PC-3 (cell line): ENCODE measurements at regions of chr15 and their contacts with region 1.

Region 1: DNA sequence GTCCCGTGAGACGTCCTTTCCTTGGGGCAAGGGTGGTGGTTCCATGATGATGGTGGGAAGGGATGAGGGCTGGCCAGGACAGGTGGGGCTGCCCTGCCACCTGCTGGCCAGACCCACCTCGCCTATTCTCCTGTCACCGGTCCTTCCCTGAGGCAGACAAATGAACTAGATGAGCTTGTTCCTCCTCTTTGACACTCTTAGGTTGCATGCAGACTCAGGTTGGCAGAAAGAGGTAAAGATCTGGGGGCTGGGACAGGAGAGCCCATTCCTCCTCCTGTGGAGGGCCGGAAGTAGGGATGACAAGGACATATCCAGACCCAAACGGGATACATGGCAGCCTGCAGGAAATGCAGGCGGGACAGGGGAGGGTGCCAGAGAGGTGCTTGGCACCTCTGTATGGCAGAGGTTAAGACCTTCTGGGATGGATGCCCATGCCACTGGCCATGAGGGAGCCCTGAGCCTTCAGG is 38.6 kb downstream of the ACSBG1 start:
- DNase-seq: peak; percentile 54
- ATAC-seq: peak; percentile 86
- H3K4me3 ChIP-seq: no peak overlapping the region
- H3K27ac ChIP-seq: no peak overlapping the region
- H3K4me1 ChIP-seq: no peaks in the 10 kb centered on the region
- H3K27me3 ChIP-seq: no peaks in the 10 kb centered on the region
- CTCF ChIP-seq: peak; percentile 90

Region 2: GRCh38 chr15:78131295-78132061 is 64.3 kb before region 1 on chr15 and contains the start of gene CIB2:
- CTCF ChIA-PET with region 1: interaction called, 4 read pairs
- POLR2A ChIA-PET with region 1: no interaction called
- intact Hi-C with region 1: loop called (anchors 5 kb)
- DNase-seq: peak; percentile 56
- ATAC-seq: peak; percentile 58
- H3K4me3 ChIP-seq: peak within 1 kb of the TSS; percentile 62
- H3K27ac ChIP-seq: no peak within 1 kb of the TSS
- H3K4me1 ChIP-seq: peaks cover 42% of the 10 kb centered on the region
- H3K27me3 ChIP-seq: no peaks in the 10 kb centered on the region
- CTCF ChIP-seq: peak; percentile 57
- total RNA-seq, gene CIB2: 7.3 and 10.4 TPM in 2 replicates